Pancreas (tissue), 10 donors: ENCODE measurements at regions of chr6 and their contacts with region 1.

Region 1: DNA sequence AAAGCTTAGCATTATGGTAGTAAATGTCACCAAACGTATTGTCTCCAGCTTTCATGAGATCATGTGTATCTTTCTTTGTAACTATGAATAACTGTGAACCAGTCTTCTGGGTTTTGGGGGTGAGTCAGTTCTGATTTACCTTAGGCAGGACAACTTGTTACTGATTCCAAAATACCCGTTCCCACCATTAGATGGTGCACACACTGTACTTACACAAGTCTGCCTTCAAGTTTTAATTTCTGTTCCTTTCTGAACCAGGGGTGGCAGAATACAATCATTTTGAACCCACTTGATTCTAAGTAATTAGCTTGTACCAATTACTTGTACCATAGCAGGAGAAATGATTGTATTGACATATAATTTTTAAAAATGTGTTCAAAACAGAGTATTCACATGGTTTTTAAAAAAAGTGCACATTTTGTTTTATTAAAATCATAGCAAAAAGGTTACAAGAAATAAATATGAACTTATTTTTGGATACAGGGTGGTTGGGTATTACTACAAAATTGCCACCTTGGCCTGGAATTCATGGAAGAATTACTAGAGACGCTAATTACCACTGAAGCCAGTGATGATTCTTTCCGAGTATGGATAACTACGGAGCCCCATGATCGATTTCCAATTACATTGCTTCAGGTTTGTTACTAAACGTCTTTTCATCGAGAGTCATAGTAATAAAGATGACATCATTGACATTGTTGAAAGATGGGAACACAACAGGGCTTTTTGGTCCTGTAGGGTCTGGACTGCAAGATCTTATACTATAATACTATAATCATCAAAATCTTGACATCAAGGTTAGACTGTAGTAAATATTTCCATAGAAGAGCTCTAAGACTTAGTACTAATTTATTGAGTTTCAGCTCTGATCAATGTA is 75.2 kb upstream of the GLP1R start:
- DNase-seq: peak in 3 of 6 donors; percentile 20 to 51 (median 24)
- ATAC-seq: peak; percentile 78 to 92 (median 84)
- H3K4me3 ChIP-seq: no peak overlapping the region
- H3K27ac ChIP-seq: no peak overlapping the region
- H3K4me1 ChIP-seq: peaks cover 0 to 19% (median 13%) of the 10 kb centered on the region in 3 donors
- H3K27me3 ChIP-seq: no peaks in the 10 kb centered on the region
- CTCF ChIP-seq: peak; percentile 27 to 54 (median 49)

Region 2: GRCh38 chr6:39153766-39154397 is 180.5 kb after region 1 on chr6:
- intact Hi-C with region 1: loop called in 1 of 3 experiments (anchors 10 kb)
- DNase-seq: no peak
- ATAC-seq: no peak
- H3K4me3 ChIP-seq: no peak overlapping the region
- H3K27ac ChIP-seq: no peak overlapping the region
- H3K4me1 ChIP-seq: no peaks in the 10 kb centered on the region
- H3K27me3 ChIP-seq: no peaks in the 10 kb centered on the region
- CTCF ChIP-seq: no peak

Region 3: DNA sequence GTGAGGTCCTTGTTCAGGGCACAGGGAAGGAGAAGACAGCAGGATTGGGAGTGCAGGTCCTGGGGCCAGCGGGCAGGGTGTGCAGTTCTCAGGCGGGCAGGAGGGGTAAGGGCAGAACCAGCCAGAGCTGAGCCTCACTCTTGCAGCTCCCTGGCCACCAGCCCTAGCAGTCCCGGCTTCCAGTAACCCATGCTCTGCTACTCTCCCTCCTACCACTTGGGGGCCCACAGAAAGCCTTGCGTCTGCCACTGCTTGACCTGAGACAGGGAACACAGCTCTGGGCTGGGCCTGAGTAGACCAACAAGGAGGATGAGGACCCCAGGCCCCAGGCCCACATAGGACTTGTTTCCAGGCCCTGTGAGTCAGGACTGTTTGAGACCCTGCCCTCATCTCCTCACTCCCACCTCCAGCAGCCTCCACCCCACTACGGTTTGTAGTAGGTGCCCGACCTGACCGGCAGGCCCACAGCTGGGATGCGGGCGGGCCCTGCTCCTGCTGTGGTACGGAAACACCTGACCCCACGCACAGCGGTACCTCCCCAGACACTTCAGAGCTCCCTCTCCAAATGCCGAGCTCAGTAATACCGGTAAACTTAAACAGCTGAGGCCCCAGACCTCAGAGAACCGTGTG is 216.6 kb after region 1 on chr6:
- intact Hi-C with region 1: no loop called
- DNase-seq: peak in 4 of 6 donors; percentile 28 to 74 (median 58)
- ATAC-seq: peak; percentile 60 to 87 (median 84)
- H3K4me3 ChIP-seq: no peak overlapping the region
- H3K27ac ChIP-seq: peak overlapping the region in 1 of 4 donors; percentile 3
- H3K4me1 ChIP-seq: peaks cover 0 to 10% (median 0%) of the 10 kb centered on the region in 3 donors
- H3K27me3 ChIP-seq: no peaks in the 10 kb centered on the region
- CTCF ChIP-seq: peak; percentile 15 to 49 (median 40)

Region 4: GRCh38 chr6:39302669-39303424 is 329.4 kb after region 1 on chr6:
- intact Hi-C with region 1: loop called in 1 of 3 experiments (anchors 10 kb)
- DNase-seq: peak; percentile 70 to 95 (median 87)
- ATAC-seq: peak; percentile 91 to 99 (median 98)
- H3K4me3 ChIP-seq: peak overlapping the region in 1 of 4 donors; percentile 5
- H3K27ac ChIP-seq: no peak overlapping the region
- H3K4me1 ChIP-seq: no peaks in the 10 kb centered on the region
- H3K27me3 ChIP-seq: no peaks in the 10 kb centered on the region
- CTCF ChIP-seq: peak; percentile 80 to 92 (median 82)

Region 5: DNA sequence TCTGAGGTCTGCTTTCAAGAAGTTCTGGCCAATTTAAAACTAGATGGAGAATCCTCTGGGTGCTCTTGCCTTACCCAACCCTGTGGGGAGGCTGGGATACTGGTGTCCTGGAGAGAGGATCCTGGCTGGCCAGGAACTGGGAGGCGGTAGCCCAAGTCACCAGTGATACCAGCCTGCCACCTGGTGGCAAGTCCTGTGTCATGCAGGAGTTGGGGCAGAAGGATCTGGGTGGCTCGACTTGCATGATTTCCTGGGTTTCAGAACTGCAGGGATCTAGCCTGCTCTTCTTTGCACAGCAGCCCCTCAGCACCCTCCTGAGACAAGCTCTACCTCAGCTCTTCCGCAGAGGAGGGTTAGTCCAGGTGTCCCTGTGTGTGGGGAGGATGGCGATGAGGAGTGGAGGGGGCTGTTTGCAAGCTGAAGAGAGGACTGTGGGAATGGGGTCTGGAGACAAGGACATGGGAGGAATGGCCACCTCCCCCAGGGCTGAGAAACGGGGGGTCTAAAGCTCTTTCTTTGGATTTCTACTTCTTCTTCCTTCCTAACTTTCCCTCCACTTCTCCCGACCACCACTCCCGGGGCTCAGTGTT is 336.6 kb after region 1 on chr6:
- intact Hi-C with region 1: loop called in 2 of 3 experiments (anchors 10 kb)
- DNase-seq: peak; percentile 63 to 91 (median 84)
- ATAC-seq: peak; percentile 81 to 92 (median 84)
- H3K4me3 ChIP-seq: no peak overlapping the region
- H3K27ac ChIP-seq: no peak overlapping the region
- H3K4me1 ChIP-seq: peaks cover 0 to 3% (median 0%) of the 10 kb centered on the region in 3 donors
- H3K27me3 ChIP-seq: no peaks in the 10 kb centered on the region
- CTCF ChIP-seq: peak; percentile 79 to 89 (median 82)